ENCODE measurements at regions of chr9 and their contacts with region 1.

Region 1: GRCh38 chr9:134660407-134660806 is 18.8 kb downstream of the COL5A1 start:
- DNase-seq: no peak
- H3K4me3 ChIP-seq: no peak overlapping the region
- H3K27ac ChIP-seq: peak overlapping the region; percentile 92 to 97; a peak in 3 of 4 replicates
- H3K4me1 ChIP-seq: peaks cover 26 to 40% of the 10 kb centered on the region in 2 experiments
- H3K27me3 ChIP-seq: no peaks in the 10 kb centered on the region
- CTCF ChIP-seq: peak; percentile 73
- EP300 ChIP-seq: no peak
- RAD21 ChIP-seq: no peak

Region 2: GRCh38 chr9:133589454-133590227 is 1070.8 kb before region 1 on chr9:
- CTCF ChIA-PET with region 1: no interaction called
- POLR2A ChIA-PET with region 1: no interaction called
- DNase-seq: no peak
- H3K4me3 ChIP-seq: no peak overlapping the region
- H3K27ac ChIP-seq: peak overlapping the region in 1 of 2 experiments; percentile 39; a peak in 1 of 4 replicates
- H3K4me1 ChIP-seq: peaks cover 0 to 69% of the 10 kb centered on the region in 2 experiments; a peak in 3 of 4 replicates
- H3K27me3 ChIP-seq: peaks cover 19% of the 10 kb centered on the region
- CTCF ChIP-seq: peak; percentile 49
- EP300 ChIP-seq: no peak
- RAD21 ChIP-seq: no peak

Region 3: GRCh38 chr9:134698587-134699342 is 38.4 kb after region 1 on chr9:
- CTCF ChIA-PET with region 1: interaction called, 19 read pairs
- POLR2A ChIA-PET with region 1: no interaction called
- DNase-seq: peak; percentile 91
- H3K4me3 ChIP-seq: peak overlapping the region in 1 of 2 experiments; percentile 51; a peak in 1 of 4 replicates
- H3K27ac ChIP-seq: no peak overlapping the region
- H3K4me1 ChIP-seq: peaks cover 0 to 6% of the 10 kb centered on the region in 2 experiments; a peak in 1 of 4 replicates
- H3K27me3 ChIP-seq: no peaks in the 10 kb centered on the region
- CTCF ChIP-seq: peak; percentile 82
- EP300 ChIP-seq: no peak
- RAD21 ChIP-seq: peak; percentile 95

Region 4: DNA sequence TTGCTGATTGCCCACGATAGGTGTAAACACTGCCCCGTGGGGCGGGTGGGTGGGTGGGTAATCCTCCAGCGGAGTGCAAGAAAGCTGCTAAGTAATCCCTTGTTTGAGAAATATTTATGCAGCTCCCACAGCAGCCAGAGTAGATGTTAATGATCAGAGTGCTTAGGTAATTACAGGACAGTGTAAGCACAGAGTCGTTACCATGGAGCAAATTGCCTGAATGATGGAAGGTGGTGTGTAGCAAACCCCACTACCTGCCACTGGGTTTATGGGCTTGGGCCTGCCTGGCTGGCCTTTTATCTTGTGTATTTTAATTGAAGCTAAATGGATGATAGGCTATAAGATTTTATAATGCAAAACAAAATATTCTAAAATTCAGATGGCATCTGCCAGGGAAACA is 91.2 kb after region 1 on chr9:
- CTCF ChIA-PET with region 1: no interaction called
- POLR2A ChIA-PET with region 1: no interaction called
- DNase-seq: no peak
- H3K4me3 ChIP-seq: no peak overlapping the region
- H3K27ac ChIP-seq: no peak overlapping the region
- H3K4me1 ChIP-seq: no peaks in the 10 kb centered on the region
- H3K27me3 ChIP-seq: no peaks in the 10 kb centered on the region
- CTCF ChIP-seq: no peak
- EP300 ChIP-seq: no peak
- RAD21 ChIP-seq: no peak

Measured in SK-N-SH (cell line).